ENCODE measurements at regions of chr19 and their contacts with region 1.

Region 1: DNA sequence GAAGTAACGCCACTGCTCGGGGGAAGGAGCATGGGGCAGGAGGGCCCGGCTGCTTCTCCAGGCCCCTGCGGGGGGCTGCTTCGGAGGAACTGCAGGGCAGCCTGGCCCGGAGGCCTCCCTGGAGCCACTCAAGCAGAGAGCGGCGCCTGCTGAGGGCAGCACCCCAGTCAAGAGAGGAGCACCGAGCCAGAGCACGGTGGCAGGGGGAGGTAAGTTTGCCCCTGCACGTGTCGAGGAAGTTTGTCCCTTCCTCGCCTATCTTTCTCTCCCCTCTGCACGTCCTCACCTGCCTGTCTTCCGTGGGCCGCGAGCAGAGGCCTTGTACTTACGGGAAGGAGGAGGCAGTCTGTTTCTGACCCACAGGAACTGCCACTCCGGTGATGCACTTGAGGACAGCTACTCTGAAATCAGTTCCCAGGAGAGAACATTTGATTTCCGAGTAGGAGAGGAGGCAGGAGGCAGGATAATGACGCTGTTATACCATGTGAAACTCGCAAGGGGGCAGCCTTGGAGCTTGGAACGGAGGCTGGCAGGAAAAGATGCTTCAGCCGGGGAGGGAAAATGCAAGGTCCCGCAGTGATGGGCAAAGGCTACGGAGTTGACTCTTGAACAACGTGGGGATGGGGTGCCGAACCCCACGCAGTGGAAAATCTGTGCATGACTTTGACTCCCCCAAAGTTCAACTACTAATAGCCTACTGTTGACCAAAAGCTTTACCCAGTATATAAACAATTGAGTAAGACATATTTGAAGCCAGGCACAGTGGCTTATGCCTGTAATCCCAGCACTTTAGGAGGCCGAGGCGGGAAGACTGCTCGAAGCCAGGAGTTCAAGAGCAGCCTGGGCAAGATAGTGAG is 5.0 kb downstream of the FFAR1 start:
- DNase-seq: peak; percentile 77
- H3K4me3 Mint-ChIP-seq: no peak overlapping the region
- H3K27ac Mint-ChIP-seq: no peak overlapping the region
- H3K4me1 Mint-ChIP-seq: peaks cover 19% of the 10 kb centered on the region
- H3K27me3 Mint-ChIP-seq: peaks cover 64% of the 10 kb centered on the region

Region 2: DNA sequence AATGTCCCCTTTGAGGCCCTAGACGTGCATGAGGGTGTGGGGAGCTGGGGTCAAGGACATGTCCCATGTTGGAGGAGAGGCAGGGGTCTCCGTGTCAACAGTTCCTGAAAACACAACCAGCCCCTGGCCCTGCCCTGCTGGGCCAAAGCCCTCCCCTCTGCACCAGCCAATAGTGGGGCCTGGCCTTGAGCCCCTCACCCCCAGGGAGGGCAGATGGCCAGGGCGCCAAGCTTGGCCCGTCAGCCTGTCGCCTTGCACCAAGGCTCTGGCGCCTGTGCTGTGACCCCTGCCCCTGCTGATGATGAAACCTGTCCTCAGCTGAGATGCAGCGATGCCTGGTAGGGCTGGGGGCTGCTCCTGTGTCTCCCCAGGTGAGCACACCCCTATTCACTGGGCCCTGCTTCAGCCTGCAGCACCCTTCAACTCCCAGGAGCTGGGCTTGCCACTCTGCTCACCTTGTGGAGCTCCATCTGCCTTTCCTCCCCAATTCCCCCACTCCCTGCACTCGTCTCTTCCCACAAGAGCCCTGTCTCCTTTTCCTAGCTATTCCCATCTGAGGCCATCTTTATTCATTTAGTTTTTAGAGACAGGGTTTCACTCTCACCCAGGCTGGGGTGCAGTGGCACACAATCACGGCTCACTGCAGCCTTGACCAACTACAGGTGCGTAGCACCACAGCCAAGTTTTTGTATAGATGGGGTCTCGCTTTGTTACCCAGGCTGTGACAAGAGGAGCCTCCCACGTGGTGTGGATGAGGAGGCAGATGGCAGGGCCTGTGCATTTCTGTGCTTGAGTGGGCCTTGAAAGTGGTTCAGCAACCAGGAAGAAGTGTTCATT is 72.5 kb before region 1 on chr19:
- CTCF ChIA-PET with region 1: no interaction called
- DNase-seq: no peak
- H3K4me3 Mint-ChIP-seq: no peak overlapping the region
- H3K27ac Mint-ChIP-seq: no peak overlapping the region
- H3K4me1 Mint-ChIP-seq: no peaks in the 10 kb centered on the region
- H3K27me3 Mint-ChIP-seq: peaks cover 50% of the 10 kb centered on the region

Region 3: GRCh38 chr19:35363001-35363590 is 10.4 kb after region 1 on chr19:
- CTCF ChIA-PET with region 1: interaction called, 10 read pairs
- DNase-seq: no peak
- H3K4me3 Mint-ChIP-seq: no peak overlapping the region
- H3K27ac Mint-ChIP-seq: no peak overlapping the region
- H3K4me1 Mint-ChIP-seq: peaks cover 4% of the 10 kb centered on the region
- H3K27me3 Mint-ChIP-seq: peaks cover 41% of the 10 kb centered on the region

Region 4: DNA sequence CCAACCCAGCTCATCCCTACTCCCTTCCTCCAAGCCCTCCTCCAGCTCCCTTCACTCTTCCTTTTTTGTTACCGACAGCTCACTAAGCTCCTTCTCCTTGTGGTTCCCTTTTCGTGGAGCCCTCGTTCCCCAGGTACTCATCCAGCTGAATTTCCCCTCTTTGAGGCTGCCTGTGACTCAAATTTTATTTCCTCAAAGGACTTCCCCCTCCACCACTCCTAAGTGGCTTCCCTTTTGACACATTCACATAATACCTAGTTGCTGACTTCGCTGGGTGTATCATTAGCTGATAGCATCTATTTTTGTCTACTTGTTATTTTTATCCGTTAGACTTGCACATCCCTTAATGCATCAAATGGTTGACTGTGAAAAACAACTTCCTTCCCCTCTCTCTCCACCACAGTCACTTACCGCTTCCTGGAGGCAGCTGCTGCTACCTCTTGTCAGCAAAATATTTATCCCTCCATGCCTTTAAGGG is 109.8 kb after region 1 on chr19:
- CTCF ChIA-PET with region 1: interaction called, 95 read pairs
- DNase-seq: peak; percentile 78
- H3K4me3 Mint-ChIP-seq: peak overlapping the region; percentile 76
- H3K27ac Mint-ChIP-seq: peak overlapping the region; percentile 99
- H3K4me1 Mint-ChIP-seq: peaks cover 54% of the 10 kb centered on the region
- H3K27me3 Mint-ChIP-seq: peaks cover 29% of the 10 kb centered on the region

Region 5: DNA sequence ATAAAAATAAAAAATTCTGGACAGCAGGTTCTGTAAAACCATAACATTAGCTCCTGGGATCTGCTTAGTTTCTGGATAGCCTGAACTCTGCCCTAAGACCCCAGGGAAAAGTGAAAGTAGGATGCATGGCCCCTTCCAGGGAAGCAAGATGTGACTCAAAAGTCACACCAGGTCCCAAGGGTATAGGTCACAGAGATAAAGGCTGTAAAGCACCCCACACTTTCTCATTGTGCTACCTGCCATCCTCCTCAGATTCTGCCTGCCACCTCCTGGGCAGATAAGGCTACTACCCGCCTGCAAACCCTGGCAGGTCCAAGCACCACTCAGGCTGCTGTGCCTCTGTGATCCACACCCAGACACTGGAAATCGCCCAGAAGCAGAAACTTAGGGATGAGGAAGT is 116.0 kb after region 1 on chr19:
- CTCF ChIA-PET with region 1: interaction called, 95 read pairs
- DNase-seq: peak; percentile 80
- H3K4me3 Mint-ChIP-seq: no peak overlapping the region
- H3K27ac Mint-ChIP-seq: no peak overlapping the region
- H3K4me1 Mint-ChIP-seq: peaks cover 13% of the 10 kb centered on the region
- H3K27me3 Mint-ChIP-seq: peaks cover 23% of the 10 kb centered on the region

Region 6: GRCh38 chr19:35495107-35496064 is 142.7 kb after region 1 on chr19:
- CTCF ChIA-PET with region 1: interaction called, 59 read pairs
- DNase-seq: peak; percentile 74
- H3K4me3 Mint-ChIP-seq: no peak overlapping the region
- H3K27ac Mint-ChIP-seq: no peak overlapping the region
- H3K4me1 Mint-ChIP-seq: peaks cover 8% of the 10 kb centered on the region
- H3K27me3 Mint-ChIP-seq: peaks cover 56% of the 10 kb centered on the region

Region 7: GRCh38 chr19:35509861-35510625 is 157.4 kb after region 1 on chr19:
- CTCF ChIA-PET with region 1: interaction called, 10 read pairs
- DNase-seq: peak; percentile 79
- H3K4me3 Mint-ChIP-seq: no peak overlapping the region
- H3K27ac Mint-ChIP-seq: no peak overlapping the region
- H3K4me1 Mint-ChIP-seq: peaks cover 21% of the 10 kb centered on the region
- H3K27me3 Mint-ChIP-seq: peaks cover 94% of the 10 kb centered on the region